CD14-positive monocyte (primary cell): ENCODE measurements at regions of chr1 and their contacts with region 1.

Region 1: GRCh38 chr1:248858891-248859889 is at the start of gene ZNF692:
- DNase-seq: peak; percentile 95 to 96 (median 96)
- H3K4me3 ChIP-seq: peak within 1 kb of the TSS; percentile 67 to 76 (median 70)
- H3K4me3 Mint-ChIP-seq: peak within 1 kb of the TSS; percentile 89 to 96
- H3K27ac ChIP-seq: peak within 1 kb of the TSS; percentile 94 to 96
- H3K27ac Mint-ChIP-seq: peak within 1 kb of the TSS; percentile 98 to 100 (median 99)
- H3K4me1 ChIP-seq: peaks cover 46 to 52% of the 10 kb centered on the region in 2 donors
- H3K4me1 Mint-ChIP-seq: peaks cover 42% of the 10 kb centered on the region
- H3K27me3 ChIP-seq: no peaks in the 10 kb centered on the region
- H3K27me3 Mint-ChIP-seq: peaks cover 0 to 1% (median 0%) of the 10 kb centered on the region in 3 donors
- CTCF ChIP-seq: no peak
- polyA plus RNA-seq, gene ZNF692: 2.2 to 59.0 (median 2.4) TPM

Region 2: DNA sequence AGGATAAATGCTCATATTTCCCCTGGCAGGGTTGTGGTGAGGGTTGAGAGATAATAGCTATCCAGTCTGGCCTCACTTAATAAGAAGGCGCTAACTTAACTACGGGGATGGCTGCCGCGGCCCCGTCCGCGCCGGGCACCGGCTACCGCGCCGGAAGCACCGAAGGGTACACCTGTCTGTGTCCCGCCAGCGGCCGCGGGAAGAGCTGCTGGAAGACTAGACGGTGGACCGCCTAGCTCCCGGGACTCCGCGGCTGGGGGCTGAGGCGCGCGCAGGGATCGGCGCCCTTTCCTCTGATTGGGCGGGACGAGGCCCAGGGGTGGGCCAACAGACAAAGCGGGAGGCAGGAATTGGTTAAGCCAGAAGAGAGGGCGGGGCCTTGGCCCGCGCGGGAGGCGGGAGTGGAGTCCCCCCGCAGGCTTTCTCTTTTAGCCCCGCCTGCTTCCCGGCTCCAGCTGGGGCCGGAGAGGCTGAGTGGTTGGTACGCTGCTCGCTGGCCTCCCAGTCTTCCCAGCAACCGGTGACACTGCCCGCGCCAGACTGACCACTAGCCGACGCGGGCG is 21.3 kb before region 1 on chr1 and contains the start of gene ZNF672:
- intact Hi-C with region 1: loop called (anchors 1 to 2 kb)
- DNase-seq: peak; percentile 97 to 99 (median 98)
- H3K4me3 ChIP-seq: peak within 1 kb of the TSS; percentile 55 to 81 (median 69)
- H3K4me3 Mint-ChIP-seq: no peak within 1 kb of the TSS
- H3K27ac ChIP-seq: peak within 1 kb of the TSS; percentile 98 to 99
- H3K27ac Mint-ChIP-seq: peak within 1 kb of the TSS in 2 of 7 donors; percentile 99 to 100
- H3K4me1 ChIP-seq: peaks cover 27 to 45% of the 10 kb centered on the region in 2 donors
- H3K4me1 Mint-ChIP-seq: peaks cover 22% of the 10 kb centered on the region
- H3K27me3 ChIP-seq: no peaks in the 10 kb centered on the region
- H3K27me3 Mint-ChIP-seq: no peaks in the 10 kb centered on the region
- CTCF ChIP-seq: no peak
- polyA plus RNA-seq, gene ZNF672: 21.2 to 23.9 (median 23.4) TPM

Region 3: DNA sequence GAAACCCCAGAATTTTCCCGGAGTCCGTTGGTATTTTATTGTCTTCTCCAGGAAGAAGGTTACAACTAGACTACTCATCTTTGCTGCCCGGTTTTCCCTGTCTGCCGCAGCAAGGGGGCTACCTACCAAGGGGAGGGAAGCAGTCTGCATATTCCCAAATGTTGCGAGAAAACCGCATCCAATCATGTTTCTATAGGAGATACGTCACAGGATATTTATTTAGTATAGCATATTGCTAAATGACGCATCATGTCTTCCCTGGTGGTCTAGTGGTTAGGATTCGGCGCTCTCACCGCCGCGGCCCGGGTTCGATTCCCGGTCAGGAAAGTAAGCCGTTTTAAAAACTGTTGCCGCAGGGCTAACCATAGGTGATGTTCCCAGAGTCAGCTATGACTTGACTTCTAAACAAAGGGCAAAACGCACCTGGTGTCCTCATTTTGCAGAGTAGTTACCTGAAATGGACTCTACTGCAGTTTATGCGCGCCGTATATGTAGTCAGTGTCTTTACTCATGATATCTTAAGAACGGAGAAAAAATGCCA is 14.9 kb after region 1 on chr1:
- intact Hi-C with region 1: loop called in 1 of 2 experiments (anchors 2 kb)
- DNase-seq: peak; percentile 78 to 92 (median 84)
- H3K4me3 ChIP-seq: peak overlapping the region; percentile 65 to 94 (median 71)
- H3K4me3 Mint-ChIP-seq: peak overlapping the region; percentile 91 to 95
- H3K27ac ChIP-seq: peak overlapping the region; percentile 92
- H3K27ac Mint-ChIP-seq: peak overlapping the region; percentile 92 to 98 (median 97)
- H3K4me1 ChIP-seq: peaks cover 16 to 19% of the 10 kb centered on the region in 2 donors
- H3K4me1 Mint-ChIP-seq: peaks cover 18% of the 10 kb centered on the region
- H3K27me3 ChIP-seq: no peaks in the 10 kb centered on the region
- H3K27me3 Mint-ChIP-seq: peaks cover 0 to 3% (median 0%) of the 10 kb centered on the region in 3 donors
- CTCF ChIP-seq: no peak

Region 4: DNA sequence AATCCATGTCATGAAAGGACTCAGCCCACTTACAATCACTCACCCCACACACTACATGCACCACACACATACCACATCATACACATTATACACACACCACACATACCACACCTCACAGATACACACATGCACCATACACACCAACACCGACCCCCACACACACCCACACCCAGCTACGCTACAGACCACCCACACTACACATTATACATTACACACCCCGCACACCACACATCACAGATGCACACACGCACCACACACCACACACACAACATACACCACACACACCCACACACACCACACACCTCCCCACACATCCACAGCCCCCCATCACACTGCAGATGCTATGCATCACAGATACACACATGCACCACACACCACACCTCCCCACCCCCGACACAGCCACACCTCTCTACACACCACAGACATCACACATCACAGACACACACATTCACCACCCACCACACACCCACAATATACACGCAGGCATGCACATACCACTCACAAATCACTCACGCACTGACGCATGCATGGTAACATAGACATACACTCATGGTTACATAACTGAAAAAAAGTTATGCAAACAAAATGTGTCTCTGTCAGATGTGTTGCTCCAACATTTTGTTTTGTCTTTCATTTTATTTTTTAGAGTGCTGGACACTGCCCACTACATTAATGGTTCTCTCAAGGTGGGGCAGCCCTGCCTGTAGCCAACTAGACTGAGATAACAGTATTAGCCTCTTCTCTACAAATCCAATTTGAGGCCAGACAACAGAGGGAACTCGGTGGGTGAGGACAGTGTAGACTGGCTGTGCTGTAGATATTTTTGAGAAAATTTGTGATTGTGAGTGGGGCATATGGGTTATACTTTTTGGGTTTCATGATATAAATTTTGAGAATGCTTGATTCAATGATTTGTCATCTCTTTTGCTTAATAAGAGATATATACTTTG is 31.6 kb after region 1 on chr1:
- intact Hi-C with region 1: no loop called
- DNase-seq: no peak
- H3K4me3 ChIP-seq: no peak overlapping the region
- H3K4me3 Mint-ChIP-seq: no peak overlapping the region
- H3K27ac ChIP-seq: no peak overlapping the region
- H3K27ac Mint-ChIP-seq: no peak overlapping the region
- H3K4me1 ChIP-seq: no peaks in the 10 kb centered on the region
- H3K4me1 Mint-ChIP-seq: peaks cover 2% of the 10 kb centered on the region
- H3K27me3 ChIP-seq: no peaks in the 10 kb centered on the region
- H3K27me3 Mint-ChIP-seq: peaks cover 1 to 4% (median 2%) of the 10 kb centered on the region in 3 donors
- CTCF ChIP-seq: no peak